Activated naive CD4-positive, alpha-beta T cell treated with anti-CD3 and anti-CD28 coated beads for 36 hours (primary cell): ENCODE measurements at regions of chr16 and their contacts with region 1.

Region 1: DNA sequence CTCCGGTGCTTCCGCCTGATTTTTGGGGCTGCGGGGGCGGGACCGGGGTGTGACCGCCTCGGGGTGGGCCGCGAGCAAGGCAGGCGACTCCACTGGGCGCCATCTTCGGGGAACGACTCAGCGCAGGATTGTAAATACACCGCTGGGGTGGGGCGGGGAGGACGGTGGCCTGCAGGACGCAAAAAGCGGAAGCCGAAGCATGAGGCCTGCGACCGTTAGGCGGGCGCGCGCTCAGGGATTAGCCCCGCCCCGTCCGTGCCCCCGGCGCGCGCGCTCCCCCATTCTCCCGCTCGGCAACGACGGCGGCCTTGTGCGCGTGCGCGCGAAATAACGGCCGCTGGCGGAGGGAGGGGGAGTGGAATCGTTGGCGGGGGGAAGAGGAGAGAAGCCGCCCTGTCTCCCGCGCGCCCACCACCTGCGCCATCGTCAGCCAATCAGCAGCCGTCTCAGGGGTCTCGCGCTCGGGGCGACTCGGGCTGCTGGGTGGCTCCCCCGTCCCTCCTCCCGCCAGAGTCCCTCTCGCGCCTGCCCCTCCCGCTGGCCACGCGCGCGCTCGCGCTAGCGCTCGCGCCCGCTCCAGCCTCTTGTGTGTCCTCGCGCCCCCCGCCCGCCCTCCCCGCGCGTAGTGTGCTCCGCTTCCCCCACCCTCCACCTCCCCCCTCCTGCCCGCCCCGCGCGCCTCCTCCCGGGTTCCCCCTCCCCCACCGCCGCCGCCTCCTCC is 791 bp upstream of the MAZ start:
- DNase-seq: peak; percentile 99
- H3K4me3 Mint-ChIP-seq: peak overlapping the region; percentile 98
- H3K27ac Mint-ChIP-seq: peak overlapping the region; percentile 100
- H3K4me1 Mint-ChIP-seq: peaks cover 37% of the 10 kb centered on the region
- H3K27me3 Mint-ChIP-seq: no peaks in the 10 kb centered on the region

Region 2: GRCh38 chr16:29719063-29719462 is 86.5 kb before region 1 on chr16:
- CTCF ChIA-PET with region 1: no interaction called
- intact Hi-C with region 1: no loop called
- DNase-seq: no peak
- H3K4me3 Mint-ChIP-seq: no peak overlapping the region
- H3K27ac Mint-ChIP-seq: no peak overlapping the region
- H3K4me1 Mint-ChIP-seq: peaks cover 17% of the 10 kb centered on the region
- H3K27me3 Mint-ChIP-seq: no peaks in the 10 kb centered on the region

Region 3: DNA sequence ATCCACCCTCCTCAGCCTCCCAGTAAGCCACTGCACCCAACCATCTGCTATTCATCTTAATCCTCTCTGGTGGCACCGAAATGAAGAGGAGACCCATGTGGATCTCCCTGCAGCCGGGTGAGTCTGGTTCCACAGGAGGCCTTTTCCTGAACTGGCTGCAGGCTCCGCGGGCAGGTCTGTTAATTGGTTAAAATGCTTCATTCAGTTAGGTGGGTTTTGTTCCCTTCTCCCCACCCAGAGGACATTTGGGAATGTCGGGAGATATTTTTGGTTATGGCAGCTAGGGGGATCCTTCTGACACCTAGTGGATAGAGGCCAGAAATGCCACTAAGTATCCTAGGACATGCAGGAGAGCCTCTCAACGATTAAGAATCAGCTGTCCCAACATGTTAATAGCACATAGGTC is 76.4 kb before region 1 on chr16:
- CTCF ChIA-PET with region 1: no interaction called
- intact Hi-C with region 1: loop called (anchors 5 kb)
- DNase-seq: no peak
- H3K4me3 Mint-ChIP-seq: no peak overlapping the region
- H3K27ac Mint-ChIP-seq: no peak overlapping the region
- H3K4me1 Mint-ChIP-seq: peaks cover 35% of the 10 kb centered on the region
- H3K27me3 Mint-ChIP-seq: no peaks in the 10 kb centered on the region

Region 4: GRCh38 chr16:29790183-29790952 is 15.2 kb before region 1 on chr16 and contains the start of gene KIF22:
- CTCF ChIA-PET with region 1: interaction called, 17 read pairs
- intact Hi-C with region 1: loop called (anchors 1 kb)
- DNase-seq: peak; percentile 100
- H3K4me3 Mint-ChIP-seq: peak within 1 kb of the TSS; percentile 100
- H3K27ac Mint-ChIP-seq: peak within 1 kb of the TSS; percentile 98
- H3K4me1 Mint-ChIP-seq: peaks cover 35% of the 10 kb centered on the region
- H3K27me3 Mint-ChIP-seq: no peaks in the 10 kb centered on the region
- total RNA-seq, gene KIF22: 201 to 209 TPM

Region 5: DNA sequence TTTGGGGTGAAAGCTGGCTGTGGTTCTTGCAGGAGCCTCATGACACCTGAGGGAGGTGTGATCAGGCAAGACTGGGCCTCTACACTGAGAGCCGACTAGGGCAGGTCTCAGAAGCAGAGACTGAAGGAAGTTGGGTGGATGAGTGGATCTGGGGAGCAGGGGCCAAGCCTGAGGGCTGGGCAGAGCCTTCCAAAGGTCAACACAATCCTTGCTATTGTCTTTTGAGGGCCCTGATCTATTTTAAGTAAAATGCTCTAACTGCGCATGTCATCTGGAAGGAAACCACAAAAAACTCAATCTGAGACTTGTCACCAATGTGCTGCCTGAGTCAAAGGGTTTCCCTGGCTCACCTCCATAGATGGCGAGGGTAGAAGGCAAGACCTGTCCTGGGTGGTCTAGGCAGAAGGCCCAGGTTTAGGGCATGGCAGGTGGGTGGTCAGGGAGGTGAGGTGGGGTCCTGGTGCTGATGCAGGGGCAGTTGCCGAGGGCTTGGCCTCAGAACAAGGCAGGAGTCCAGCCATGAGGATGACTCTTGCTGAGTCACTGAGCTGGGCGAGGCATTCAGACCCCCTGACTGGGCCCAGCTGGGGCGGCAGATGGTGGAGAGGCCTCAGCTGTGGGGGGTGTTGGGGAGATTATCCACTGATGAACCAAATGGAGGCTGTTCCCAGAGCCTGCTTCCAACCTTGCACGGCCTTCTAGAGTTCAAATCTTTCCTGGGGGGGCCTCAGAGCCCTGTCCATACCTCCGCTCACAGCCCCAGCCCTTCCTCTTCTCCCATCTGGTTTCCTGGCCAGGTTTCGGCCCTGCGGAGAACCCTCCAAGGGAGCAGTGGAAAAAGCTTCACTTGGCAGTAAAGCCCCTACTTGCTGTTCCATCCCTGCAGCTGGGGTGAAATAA is 19.9 kb after region 1 on chr16:
- CTCF ChIA-PET with region 1: interaction called, 18 read pairs
- intact Hi-C with region 1: loop called (anchors 1 kb)
- DNase-seq: peak; percentile 78
- H3K4me3 Mint-ChIP-seq: peak overlapping the region; percentile 55
- H3K27ac Mint-ChIP-seq: peak overlapping the region; percentile 90
- H3K4me1 Mint-ChIP-seq: peaks cover 81% of the 10 kb centered on the region
- H3K27me3 Mint-ChIP-seq: no peaks in the 10 kb centered on the region

Region 6: DNA sequence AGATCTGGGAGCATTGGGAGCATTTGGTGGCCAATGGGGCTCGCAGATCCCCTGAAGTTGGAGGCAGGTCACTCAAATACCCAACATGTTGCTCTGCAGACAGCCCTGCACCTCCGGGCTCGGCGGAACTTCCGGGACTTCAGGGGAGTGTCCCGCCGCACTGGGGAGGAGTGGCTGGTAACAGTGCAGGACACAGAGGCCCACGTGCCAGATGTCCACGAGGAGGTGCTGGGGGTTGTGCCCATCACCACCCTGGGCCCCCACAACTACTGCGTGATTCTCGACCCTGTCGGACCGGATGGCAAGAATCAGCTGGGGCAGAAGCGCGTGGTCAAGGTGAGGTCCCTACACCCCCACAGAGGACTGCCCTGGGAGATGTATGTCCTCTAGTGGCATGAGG is 31.1 kb after region 1 on chr16:
- CTCF ChIA-PET with region 1: no interaction called
- intact Hi-C with region 1: no loop called
- DNase-seq: no peak
- H3K4me3 Mint-ChIP-seq: no peak overlapping the region
- H3K27ac Mint-ChIP-seq: no peak overlapping the region
- H3K4me1 Mint-ChIP-seq: peaks cover 13% of the 10 kb centered on the region
- H3K27me3 Mint-ChIP-seq: no peaks in the 10 kb centered on the region

Region 7: DNA sequence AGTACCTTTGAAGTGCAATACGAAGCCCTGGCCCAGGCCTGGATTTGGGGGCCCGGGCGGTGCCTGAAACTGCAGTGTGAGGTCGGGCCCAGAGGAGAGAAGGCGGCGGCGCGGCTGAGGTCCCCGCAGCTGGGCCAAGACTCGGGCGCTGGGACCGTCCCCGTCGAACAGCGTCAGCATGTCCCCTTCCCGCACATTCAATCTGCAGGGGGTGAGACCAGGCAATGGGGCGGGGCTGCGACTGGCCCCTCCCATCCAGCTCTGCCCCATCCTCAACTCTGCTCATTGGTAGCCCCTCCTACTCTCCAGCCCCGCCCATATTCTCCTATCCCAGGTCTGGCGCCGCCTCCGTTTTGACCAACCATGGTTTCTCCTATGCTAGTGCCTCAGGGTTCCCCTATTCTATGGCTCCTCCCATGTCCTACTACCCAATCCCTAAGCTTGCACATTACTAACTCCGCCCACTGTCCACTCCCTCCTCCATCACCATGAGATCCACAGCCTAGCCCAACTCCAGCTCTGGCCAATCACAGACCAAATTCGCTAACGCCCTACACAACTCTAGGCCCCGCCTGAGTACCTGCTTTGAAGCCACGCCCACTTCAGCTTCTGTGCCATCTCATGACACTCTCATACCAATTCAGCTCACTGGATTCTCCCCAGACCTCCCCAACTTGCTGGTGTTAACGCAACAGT is 71.9 kb after region 1 on chr16:
- CTCF ChIA-PET with region 1: no interaction called
- intact Hi-C with region 1: no loop called
- DNase-seq: peak; percentile 82
- H3K4me3 Mint-ChIP-seq: peak overlapping the region; percentile 54
- H3K27ac Mint-ChIP-seq: no peak overlapping the region
- H3K4me1 Mint-ChIP-seq: peaks cover 14% of the 10 kb centered on the region
- H3K27me3 Mint-ChIP-seq: peaks cover 25% of the 10 kb centered on the region

Region 8: GRCh38 chr16:29926005-29926710 is 120.6 kb after region 1 on chr16 and contains the start of gene KCTD13:
- CTCF ChIA-PET with region 1: interaction called, 3 read pairs
- intact Hi-C with region 1: loop called (anchors 5 kb)
- DNase-seq: peak; percentile 86
- H3K4me3 Mint-ChIP-seq: peak within 1 kb of the TSS; percentile 91
- H3K27ac Mint-ChIP-seq: peak within 1 kb of the TSS; percentile 88
- H3K4me1 Mint-ChIP-seq: peaks cover 32% of the 10 kb centered on the region
- H3K27me3 Mint-ChIP-seq: no peaks in the 10 kb centered on the region
- total RNA-seq, gene KCTD13: 25.8 to 29.4 TPM

Region 9: GRCh38 chr16:29995911-29996772 is 190.6 kb after region 1 on chr16 and contains the start of gene INO80E:
- CTCF ChIA-PET with region 1: no interaction called
- intact Hi-C with region 1: loop called (anchors 1 kb)
- DNase-seq: peak; percentile 100
- H3K4me3 Mint-ChIP-seq: peak within 1 kb of the TSS; percentile 98
- H3K27ac Mint-ChIP-seq: peak within 1 kb of the TSS; percentile 98
- H3K4me1 Mint-ChIP-seq: peaks cover 32% of the 10 kb centered on the region
- H3K27me3 Mint-ChIP-seq: no peaks in the 10 kb centered on the region
- total RNA-seq, gene INO80E: 62.0 to 65.4 TPM

Region 10: DNA sequence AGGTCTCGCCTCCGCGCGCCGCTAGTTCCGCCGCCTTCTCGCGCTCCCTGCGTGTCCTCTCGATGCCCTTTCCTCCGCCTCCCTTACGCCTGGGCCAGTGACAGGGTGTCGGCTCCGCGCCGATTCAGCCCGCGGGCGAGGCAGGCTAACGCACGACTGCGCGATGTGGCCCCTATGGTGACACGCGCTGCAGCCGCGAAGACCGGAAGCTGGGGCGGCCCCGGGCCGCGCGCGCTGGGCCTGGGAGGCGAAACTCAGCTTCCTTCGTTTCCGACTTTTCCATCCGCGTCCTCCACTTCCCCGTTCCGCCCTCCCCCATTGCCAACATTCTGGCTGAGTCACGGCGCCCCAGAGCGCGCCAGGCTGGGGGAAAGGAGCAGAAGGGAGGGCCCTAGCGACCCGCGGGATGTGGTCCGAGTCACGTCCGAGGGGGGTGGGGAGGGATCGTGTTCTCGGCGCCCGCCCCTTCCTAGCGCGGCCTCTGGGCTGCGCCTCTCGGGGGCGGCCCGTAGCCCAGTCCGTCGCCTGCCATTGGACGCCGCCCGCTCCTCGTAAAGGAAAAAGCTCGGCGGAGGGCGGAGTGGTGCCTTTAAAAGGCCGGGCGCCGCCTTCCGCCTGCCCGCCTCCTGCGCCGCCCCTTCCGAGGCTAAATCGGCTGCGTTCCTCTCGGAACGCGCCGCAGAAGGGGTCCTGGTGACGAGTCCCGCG is 259.8 kb after region 1 on chr16 and contains the start of gene ALDOA:
- CTCF ChIA-PET with region 1: no interaction called
- intact Hi-C with region 1: loop called (anchors 5 kb)
- DNase-seq: peak; percentile 97
- H3K4me3 Mint-ChIP-seq: peak within 1 kb of the TSS; percentile 95
- H3K27ac Mint-ChIP-seq: peak within 1 kb of the TSS; percentile 98
- H3K4me1 Mint-ChIP-seq: peaks cover 32% of the 10 kb centered on the region
- H3K27me3 Mint-ChIP-seq: no peaks in the 10 kb centered on the region
- total RNA-seq, gene ALDOA: 1,750 to 1,795 TPM